CD8-positive, alpha-beta T cell (primary cell): ENCODE measurements at regions of chr11 and their contacts with region 1.

Region 1: GRCh38 chr11:62678770-62679696 is at the start of gene UBXN1:
- DNase-seq: peak; percentile 59 to 92 (median 85)
- ATAC-seq: peak; percentile 74
- H3K4me3 ChIP-seq: peak within 1 kb of the TSS; percentile 91 to 100
- H3K4me3 Mint-ChIP-seq: peak within 1 kb of the TSS; percentile 90
- H3K27ac ChIP-seq: peak within 1 kb of the TSS; percentile 87 to 94
- H3K27ac Mint-ChIP-seq: peak within 1 kb of the TSS; percentile 93
- H3K4me1 ChIP-seq: peaks cover 26% of the 10 kb centered on the region
- H3K4me1 Mint-ChIP-seq: peaks cover 39% of the 10 kb centered on the region
- H3K27me3 ChIP-seq: no peaks in the 10 kb centered on the region
- H3K27me3 Mint-ChIP-seq: no peaks in the 10 kb centered on the region
- CTCF ChIP-seq: no peak
- total RNA-seq, gene UBXN1: 232 to 242 TPM

Region 2: GRCh38 chr11:62621567-62622470 is 57.2 kb before region 1 on chr11 and contains the start of gene B3GAT3:
- CTCF ChIA-PET with region 1: interaction called, 4 read pairs
- POLR2A ChIA-PET with region 1: no interaction called
- intact Hi-C with region 1: loop called in 1 of 2 experiments (anchors 2 kb)
- DNase-seq: peak; percentile 90 to 99 (median 97)
- ATAC-seq: peak; percentile 81
- H3K4me3 ChIP-seq: peak within 1 kb of the TSS; percentile 69 to 80
- H3K4me3 Mint-ChIP-seq: peak within 1 kb of the TSS; percentile 98
- H3K27ac ChIP-seq: peak within 1 kb of the TSS; percentile 78 to 88
- H3K27ac Mint-ChIP-seq: peak within 1 kb of the TSS; percentile 97
- H3K4me1 ChIP-seq: peaks cover 20% of the 10 kb centered on the region
- H3K4me1 Mint-ChIP-seq: peaks cover 30% of the 10 kb centered on the region
- H3K27me3 ChIP-seq: no peaks in the 10 kb centered on the region
- H3K27me3 Mint-ChIP-seq: no peaks in the 10 kb centered on the region
- CTCF ChIP-seq: no peak
- total RNA-seq, gene B3GAT3: 41.7 to 44.0 TPM

Region 3: GRCh38 chr11:62860835-62861563 is 182.0 kb after region 1 on chr11:
- CTCF ChIA-PET with region 1: interaction called, 13 read pairs
- POLR2A ChIA-PET with region 1: interaction called, 4 read pairs
- intact Hi-C with region 1: loop called in 1 of 2 experiments (anchors 1 kb)
- DNase-seq: no peak
- ATAC-seq: no peak
- H3K4me3 ChIP-seq: no peak overlapping the region
- H3K4me3 Mint-ChIP-seq: no peak overlapping the region
- H3K27ac ChIP-seq: no peak overlapping the region
- H3K27ac Mint-ChIP-seq: no peak overlapping the region
- H3K4me1 ChIP-seq: peaks cover 6% of the 10 kb centered on the region
- H3K4me1 Mint-ChIP-seq: peaks cover 21% of the 10 kb centered on the region
- H3K27me3 ChIP-seq: no peaks in the 10 kb centered on the region
- H3K27me3 Mint-ChIP-seq: no peaks in the 10 kb centered on the region
- CTCF ChIP-seq: no peak